ENCODE measurements at regions of chr18 and their contacts with region 1.

Region 1: DNA sequence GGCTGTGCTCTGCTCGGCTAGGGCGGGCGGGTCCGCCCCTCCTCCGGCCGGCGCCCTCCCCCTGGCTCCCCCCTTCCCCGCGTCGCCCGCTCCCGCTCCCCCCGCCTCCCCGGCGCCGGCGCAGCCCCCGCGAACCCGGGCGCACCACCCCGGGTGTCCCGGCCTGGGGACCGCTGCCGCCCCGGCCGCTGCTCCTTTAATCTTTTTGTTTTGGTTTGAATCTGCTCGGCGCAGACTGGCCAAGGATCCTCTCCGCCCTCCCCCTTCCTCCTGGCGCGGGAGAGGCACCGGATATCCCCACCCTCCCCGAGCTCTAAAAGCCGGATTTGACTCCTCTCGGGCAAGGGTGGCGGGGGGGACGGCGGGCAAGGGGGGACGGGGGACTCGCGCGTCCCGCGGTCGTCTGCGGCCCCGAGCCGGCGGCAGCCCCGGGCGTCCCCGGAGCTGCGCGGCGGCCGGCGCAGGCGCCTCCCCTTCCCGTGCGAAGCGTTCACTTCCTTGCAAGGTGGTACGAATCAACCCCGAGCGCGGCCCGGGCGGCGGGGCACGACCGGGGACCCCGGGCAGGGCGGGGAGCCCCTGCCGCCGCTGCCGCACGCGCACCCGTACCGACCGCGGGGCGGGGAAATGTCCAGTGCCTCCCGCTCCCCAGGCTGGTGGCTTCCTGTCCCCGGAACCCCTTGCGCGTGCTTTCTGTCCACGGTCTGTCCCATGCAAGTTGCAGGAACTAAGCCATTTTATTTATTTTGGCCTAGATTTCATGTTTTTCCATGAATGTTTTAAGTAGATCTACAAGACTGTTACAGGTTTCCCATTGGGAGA is at the start of gene PTGR3:
- DNase-seq: peak; percentile 87
- H3K4me3 ChIP-seq: peak within 1 kb of the TSS; percentile 40 to 99 (median 84)
- H3K27ac ChIP-seq: peak within 1 kb of the TSS; percentile 97 to 100 (median 98)
- H3K4me1 ChIP-seq: peaks cover 8 to 62% (median 48%) of the 10 kb centered on the region in 4 donors
- H3K27me3 ChIP-seq: no peaks in the 10 kb centered on the region
- CTCF ChIP-seq: no peak
- EP300 ChIP-seq: no peak
- POLR2A ChIP-seq: peak; percentile 41
- total RNA-seq, gene PTGR3: 10.1 to 45.9 (median 23.4) TPM

Region 2: DNA sequence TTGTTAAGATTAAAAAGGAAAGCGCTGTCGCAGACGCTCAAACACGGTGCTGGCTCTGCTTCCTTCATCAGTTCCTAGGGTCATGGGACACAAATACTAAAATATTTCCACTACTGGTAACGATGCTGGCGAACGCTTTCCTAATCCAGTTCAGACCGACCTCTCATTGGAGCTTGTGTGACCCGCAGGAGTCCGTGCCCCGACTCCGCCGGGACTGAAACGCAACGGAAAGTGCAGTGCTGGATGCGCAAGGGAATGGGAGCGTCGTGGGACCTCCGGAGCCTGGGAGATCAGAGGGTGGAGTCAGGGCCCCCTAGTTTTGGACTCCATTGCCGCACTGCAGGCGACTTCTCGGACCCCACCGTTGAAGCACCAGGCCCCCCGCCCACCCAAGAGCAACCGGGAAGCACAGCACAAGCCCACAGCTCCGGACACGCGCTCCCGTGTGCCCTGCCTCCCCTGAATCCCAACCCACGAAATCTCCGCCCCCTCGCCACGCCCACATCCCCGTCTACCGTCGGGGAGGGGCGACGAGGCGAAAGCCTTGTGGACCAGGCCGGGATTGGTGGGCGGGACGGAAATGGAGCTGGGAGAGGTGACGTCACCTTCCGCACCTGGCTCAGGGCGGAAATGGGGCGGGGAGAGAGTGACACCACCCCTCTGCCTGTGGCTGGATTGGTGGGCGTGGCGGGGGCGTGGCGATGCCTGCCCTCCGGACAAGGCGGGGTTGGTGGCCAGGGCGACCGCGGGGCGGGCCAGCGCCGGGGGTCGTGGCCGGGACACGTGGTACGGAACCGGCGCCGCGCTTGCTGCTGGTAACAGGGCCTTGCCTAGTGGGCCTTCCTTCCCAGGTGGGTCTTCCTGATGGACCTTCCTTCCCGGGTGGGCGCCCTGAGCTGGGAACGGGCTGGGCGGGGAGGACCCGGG is 713.5 kb before region 1 on chr18 and contains the start of gene CNDP2:
- in situ Hi-C with region 1: loop called in 1 of 4 experiments (anchors 25 kb)
- intact Hi-C with region 1: no loop called
- DNase-seq: peak; percentile 100
- H3K4me3 ChIP-seq: peak within 1 kb of the TSS; percentile 70 to 94 (median 80)
- H3K27ac ChIP-seq: peak within 1 kb of the TSS; percentile 90 to 95 (median 94)
- H3K4me1 ChIP-seq: peaks cover 9 to 39% (median 27%) of the 10 kb centered on the region in 4 donors
- H3K27me3 ChIP-seq: no peaks in the 10 kb centered on the region
- CTCF ChIP-seq: no peak
- EP300 ChIP-seq: no peak
- POLR2A ChIP-seq: peak; percentile 86
- total RNA-seq, gene CNDP2: 143 to 284 (median 155) TPM

Region 3: DNA sequence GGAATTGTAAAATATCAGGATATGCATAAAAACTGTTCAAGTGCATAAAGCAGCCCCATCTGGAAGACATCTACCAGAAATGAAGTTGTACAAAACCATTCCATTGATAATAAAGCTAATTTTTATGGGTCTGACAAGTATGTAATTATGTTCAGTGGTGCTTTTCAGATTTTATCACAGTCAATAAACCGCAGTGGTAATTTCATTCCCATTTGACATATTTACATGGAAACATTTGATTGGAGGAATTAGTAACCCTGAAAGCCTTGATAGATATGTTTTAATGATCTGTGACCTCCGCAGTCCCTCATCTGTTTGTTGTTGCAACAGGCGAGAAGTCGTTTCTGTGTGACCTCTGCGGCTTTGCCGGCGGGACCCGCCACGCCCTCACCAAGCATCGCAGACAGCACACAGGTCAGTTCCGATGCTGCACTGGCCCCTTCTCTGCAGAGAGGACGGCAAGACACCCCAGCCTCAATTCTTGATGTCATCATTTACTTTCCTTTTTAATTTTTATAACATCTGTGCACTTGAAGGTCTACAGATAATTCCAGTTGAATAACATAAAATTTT is 328.5 kb before region 1 on chr18:
- in situ Hi-C with region 1: no loop called
- intact Hi-C with region 1: no loop called
- DNase-seq: no peak
- H3K4me3 ChIP-seq: no peak overlapping the region
- H3K27ac ChIP-seq: no peak overlapping the region
- H3K4me1 ChIP-seq: no peaks in the 10 kb centered on the region
- H3K27me3 ChIP-seq: no peaks in the 10 kb centered on the region
- CTCF ChIP-seq: no peak
- EP300 ChIP-seq: no peak
- POLR2A ChIP-seq: no peak

Region 4: GRCh38 chr18:75161256-75162028 is 47.9 kb before region 1 on chr18:
- in situ Hi-C with region 1: no loop called
- intact Hi-C with region 1: no loop called
- DNase-seq: peak; percentile 56
- H3K4me3 ChIP-seq: peak overlapping the region in 3 of 4 donors; percentile 33 to 59 (median 40)
- H3K27ac ChIP-seq: peak overlapping the region in 3 of 4 donors; percentile 9 to 41 (median 31)
- H3K4me1 ChIP-seq: peaks cover 0 to 9% (median 3%) of the 10 kb centered on the region in 4 donors
- H3K27me3 ChIP-seq: no peaks in the 10 kb centered on the region
- CTCF ChIP-seq: peak in 1 of 5 experiments; percentile 14
- EP300 ChIP-seq: no peak
- POLR2A ChIP-seq: no peak

Region 5: DNA sequence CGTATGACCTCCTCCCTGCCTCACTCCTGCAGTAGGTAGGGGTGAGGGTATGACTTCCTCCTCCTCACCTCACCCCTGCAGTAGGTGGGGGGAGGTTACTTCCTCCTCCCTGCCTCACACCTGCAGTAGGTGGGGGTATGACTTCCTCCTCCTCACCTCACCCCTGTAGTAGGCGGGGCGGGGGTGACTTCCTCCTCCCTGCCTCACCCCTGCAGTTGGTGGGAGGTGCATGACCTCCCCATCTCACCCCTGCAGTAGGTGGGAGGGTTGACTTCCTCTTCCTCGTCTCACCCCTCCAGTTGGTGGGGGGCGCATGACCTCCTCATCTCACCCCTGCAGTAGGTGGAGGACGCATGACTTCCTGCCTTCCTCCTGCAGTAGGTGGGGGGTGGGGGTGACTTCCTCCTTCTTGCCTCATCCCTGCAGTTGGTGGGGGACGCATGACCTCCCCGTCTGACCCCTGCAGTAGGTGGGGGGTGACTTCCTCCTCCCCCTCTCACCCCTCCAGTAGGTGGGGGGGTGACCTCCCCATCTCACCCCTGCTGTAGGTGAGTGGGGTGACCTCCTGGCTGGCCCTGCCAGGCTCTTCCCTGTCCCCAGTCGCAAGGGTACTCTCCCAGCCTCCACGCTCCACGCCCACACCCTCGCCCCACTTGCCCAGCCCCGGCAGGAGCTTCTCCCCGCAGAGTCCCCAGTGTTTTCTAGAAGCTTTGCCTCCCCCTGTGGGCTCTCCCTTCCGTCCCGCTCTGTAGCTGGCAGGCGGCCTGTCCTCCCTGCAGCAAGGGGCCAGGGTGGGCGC is 40.5 kb after region 1 on chr18:
- in situ Hi-C with region 1: no loop called
- intact Hi-C with region 1: loop called (anchors 10 kb)
- DNase-seq: no peak
- H3K4me3 ChIP-seq: no peak overlapping the region
- H3K27ac ChIP-seq: peak overlapping the region in 1 of 4 donors; percentile 79
- H3K4me1 ChIP-seq: peaks cover 12 to 48% (median 21%) of the 10 kb centered on the region in 4 donors
- H3K27me3 ChIP-seq: no peaks in the 10 kb centered on the region
- CTCF ChIP-seq: no peak
- EP300 ChIP-seq: no peak
- POLR2A ChIP-seq: no peak

Region 6: DNA sequence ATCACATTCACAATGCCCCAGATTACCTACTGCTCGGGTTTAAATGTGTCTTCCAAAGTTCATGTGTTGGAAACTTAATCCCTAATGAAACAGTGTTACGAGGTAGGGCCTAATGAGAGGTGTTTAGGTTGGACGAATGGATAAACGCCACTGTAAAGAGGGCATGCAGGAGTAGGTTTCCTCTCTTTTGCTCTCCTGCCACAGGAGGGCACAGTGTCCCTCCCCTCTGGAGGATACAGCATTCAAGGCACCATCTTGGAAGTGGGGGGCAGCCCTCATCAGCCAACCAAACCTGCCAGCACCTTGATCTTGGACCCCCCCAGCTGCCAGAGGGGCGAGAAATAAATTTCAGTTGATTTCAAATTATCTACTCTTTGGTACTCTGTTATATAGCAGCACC is 104.8 kb after region 1 on chr18:
- in situ Hi-C with region 1: no loop called
- intact Hi-C with region 1: no loop called
- DNase-seq: no peak
- H3K4me3 ChIP-seq: no peak overlapping the region
- H3K27ac ChIP-seq: no peak overlapping the region
- H3K4me1 ChIP-seq: no peaks in the 10 kb centered on the region
- H3K27me3 ChIP-seq: no peaks in the 10 kb centered on the region
- CTCF ChIP-seq: no peak
- EP300 ChIP-seq: no peak
- POLR2A ChIP-seq: no peak

Region 7: DNA sequence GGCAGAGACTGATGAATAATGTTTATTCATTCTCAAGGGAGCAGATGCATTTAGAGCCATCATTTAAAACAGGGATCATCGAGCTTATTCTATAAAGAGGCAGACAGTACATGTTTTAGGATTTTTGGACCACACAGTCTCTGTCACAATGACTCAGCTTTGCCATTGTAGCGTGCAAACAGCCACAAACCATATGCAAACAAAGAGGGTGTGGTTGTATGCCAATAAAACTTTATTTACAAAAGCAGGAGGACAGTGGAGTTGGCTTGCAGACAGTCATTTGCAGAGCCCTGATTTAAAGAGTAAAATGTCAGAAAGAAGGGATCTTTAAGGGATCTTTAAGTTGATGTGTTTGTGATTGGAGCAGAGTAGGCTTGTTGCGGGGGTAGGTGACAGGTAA is 166.7 kb after region 1 on chr18:
- in situ Hi-C with region 1: no loop called
- intact Hi-C with region 1: no loop called
- DNase-seq: no peak
- H3K4me3 ChIP-seq: no peak overlapping the region
- H3K27ac ChIP-seq: no peak overlapping the region
- H3K4me1 ChIP-seq: no peaks in the 10 kb centered on the region
- H3K27me3 ChIP-seq: no peaks in the 10 kb centered on the region
- CTCF ChIP-seq: no peak
- EP300 ChIP-seq: no peak
- POLR2A ChIP-seq: no peak

Region 8: GRCh38 chr18:75478996-75479880 is 269.9 kb after region 1 on chr18:
- in situ Hi-C with region 1: no loop called
- intact Hi-C with region 1: loop called (anchors 10 kb)
- DNase-seq: no peak
- H3K4me3 ChIP-seq: no peak overlapping the region
- H3K27ac ChIP-seq: no peak overlapping the region
- H3K4me1 ChIP-seq: peaks cover 0 to 6% (median 0%) of the 10 kb centered on the region in 4 donors
- H3K27me3 ChIP-seq: no peaks in the 10 kb centered on the region
- CTCF ChIP-seq: peak; percentile 50 to 59 (median 52)
- EP300 ChIP-seq: no peak
- POLR2A ChIP-seq: no peak

Measured in transverse colon (tissue), 4 donors.